ENCODE measurements at regions of chr6 and their contacts with region 1.

Region 1: DNA sequence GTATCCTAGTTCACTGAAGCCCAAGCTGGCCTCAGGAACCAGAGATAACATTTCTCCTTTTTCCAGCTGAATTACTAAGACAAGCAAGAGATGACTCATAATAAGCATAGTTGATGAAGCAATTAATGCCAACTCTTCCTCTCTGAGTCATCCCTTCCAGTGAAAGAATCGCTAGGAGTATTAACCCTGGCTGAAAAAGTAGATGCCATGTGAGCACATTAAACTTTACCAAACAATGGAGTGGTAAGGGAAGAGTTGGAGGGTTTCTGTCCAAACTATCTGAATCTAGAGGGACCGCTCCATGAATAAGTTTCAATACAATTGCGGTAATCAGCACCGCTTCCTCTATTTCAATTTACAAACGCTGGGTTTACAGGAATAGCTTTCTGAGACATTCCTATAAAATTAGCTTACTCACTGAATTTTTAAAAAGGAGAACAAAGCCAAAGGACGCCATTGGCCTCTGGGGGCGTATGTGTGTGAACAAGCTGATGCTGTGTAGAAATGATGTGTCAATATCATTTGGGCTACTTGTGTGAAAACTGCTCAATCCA is 48.3 kb downstream of the ATXN1 start:
- DNase-seq: peak; percentile 91
- ATAC-seq: peak; percentile 68
- H3K4me3 ChIP-seq: peak overlapping the region; percentile 8 to 38; a peak in 3 of 4 replicates
- H3K27ac ChIP-seq: peak overlapping the region; percentile 89
- H3K4me1 ChIP-seq: peaks cover 33 to 40% of the 10 kb centered on the region in 2 experiments
- H3K27me3 ChIP-seq: no peaks in the 10 kb centered on the region
- CTCF ChIP-seq: peak in 2 of 3 experiments; percentile 47 to 57; a peak in 4 of 6 replicates
- POLR2A ChIP-seq: peak; percentile 35
- RAD21 ChIP-seq: peak; percentile 28

Region 2: GRCh38 chr6:16723826-16724225 is 10.8 kb after region 1 on chr6:
- CTCF ChIA-PET with region 1: interaction called, 11 read pairs
- POLR2A ChIA-PET with region 1: interaction called, 49 read pairs
- RAD21 ChIA-PET with region 1: interaction called in 1 of 2 experiments, 3 read pairs
- intact Hi-C with region 1: no loop called
- DNase-seq: peak; percentile 84
- ATAC-seq: peak; percentile 73
- H3K4me3 ChIP-seq: no peak overlapping the region
- H3K27ac ChIP-seq: peak overlapping the region; percentile 4; the same call in 1 of the 2 replicates
- H3K4me1 ChIP-seq: peaks cover 72 to 79% of the 10 kb centered on the region in 2 experiments
- H3K27me3 ChIP-seq: no peaks in the 10 kb centered on the region
- CTCF ChIP-seq: no peak
- POLR2A ChIP-seq: no peak
- RAD21 ChIP-seq: no peak

Region 3: DNA sequence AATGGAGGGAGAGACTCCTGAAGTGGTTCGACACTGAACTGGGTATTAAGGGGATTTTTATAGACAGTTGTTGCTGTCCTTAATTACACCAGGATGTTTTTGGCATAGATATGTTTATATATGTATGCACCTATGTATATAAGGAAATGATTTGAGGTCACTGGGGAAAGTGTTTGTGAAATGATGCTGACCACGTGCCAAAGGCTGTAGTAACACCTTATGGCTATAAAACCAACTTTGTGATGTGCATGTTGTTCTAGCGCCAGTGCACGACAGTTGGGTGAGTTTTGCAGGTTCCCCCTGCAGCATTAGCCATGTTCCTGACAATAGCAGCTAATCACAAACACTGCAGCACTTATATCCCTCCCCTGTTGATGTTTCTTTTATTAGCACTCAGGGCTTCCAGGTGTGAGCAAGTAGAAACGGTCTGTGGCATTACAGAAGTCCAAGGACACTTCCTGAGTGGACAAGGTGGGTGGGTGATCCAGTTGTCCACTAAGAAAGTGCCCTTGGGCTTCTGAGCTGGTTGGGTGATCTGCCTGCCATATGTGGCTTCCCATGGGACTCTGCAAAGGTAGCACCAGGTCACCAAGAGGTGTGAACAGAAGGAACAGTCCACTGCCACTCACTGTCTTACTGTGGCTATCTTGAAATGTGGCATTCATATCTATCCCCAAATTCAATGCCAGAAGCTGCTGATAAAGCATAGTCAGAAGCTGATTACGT is 505.2 kb after region 1 on chr6:
- CTCF ChIA-PET with region 1: no interaction called
- POLR2A ChIA-PET with region 1: no interaction called
- RAD21 ChIA-PET with region 1: no interaction called
- intact Hi-C with region 1: no loop called
- DNase-seq: no peak
- ATAC-seq: no peak
- H3K4me3 ChIP-seq: no peak overlapping the region
- H3K27ac ChIP-seq: no peak overlapping the region
- H3K4me1 ChIP-seq: no peaks in the 10 kb centered on the region
- H3K27me3 ChIP-seq: no peaks in the 10 kb centered on the region
- CTCF ChIP-seq: no peak
- POLR2A ChIP-seq: no peak
- RAD21 ChIP-seq: no peak

Measured in HCT116 (cell line).